Activated naive CD8-positive, alpha-beta T cell treated with anti-CD3 and anti-CD28 coated beads, Interleukin-2, amount 10 ng/mL, durations not matched to agents 7 days and 5 days (primary cell): ENCODE measurements at regions of chr14 and their contacts with region 1.

Region 1: DNA sequence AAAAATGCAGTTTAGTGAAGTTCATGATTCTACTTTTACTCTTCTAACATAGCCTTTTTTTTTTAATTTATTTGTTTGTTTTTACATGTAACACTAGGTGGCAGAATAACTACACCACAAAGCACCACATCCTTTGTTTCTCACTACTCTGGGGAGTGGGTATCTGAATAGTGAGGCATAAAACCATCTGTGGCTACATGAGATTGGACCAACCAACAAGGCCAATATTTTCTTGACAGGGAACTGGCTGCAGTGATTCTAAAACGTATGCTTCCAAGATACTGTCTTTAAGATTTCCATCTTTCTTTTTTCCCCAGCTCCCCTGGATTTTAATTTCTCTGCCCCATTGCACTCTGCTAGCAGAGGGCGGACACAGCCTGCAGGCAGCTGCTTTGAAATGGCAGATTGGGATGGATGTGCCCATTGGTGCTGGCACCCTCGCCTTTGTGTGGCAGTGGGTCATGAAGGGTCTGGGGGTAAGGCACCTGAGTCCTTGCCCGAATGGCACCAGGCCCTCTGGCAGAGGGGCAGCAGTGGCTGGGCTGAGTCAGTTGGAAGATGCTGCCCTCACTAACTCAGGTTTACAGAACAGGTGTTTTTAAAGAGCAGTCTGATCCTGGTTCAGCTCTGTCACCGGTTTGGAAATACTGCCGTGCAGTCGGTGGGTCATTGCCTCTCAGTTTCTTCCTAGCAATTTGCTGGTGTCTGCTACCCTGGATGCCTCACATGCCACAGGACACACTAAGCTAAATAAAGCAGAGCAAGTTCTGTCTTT is 429.1 kb downstream of the RAD51B start:
- DNase-seq: peak; percentile 31
- ATAC-seq: peak; percentile 58
- H3K4me3 Mint-ChIP-seq: no peak overlapping the region
- H3K27ac Mint-ChIP-seq: no peak overlapping the region
- H3K4me1 Mint-ChIP-seq: peaks cover 12% of the 10 kb centered on the region
- H3K27me3 Mint-ChIP-seq: no peaks in the 10 kb centered on the region

Region 2: GRCh38 chr14:68816262-68816942 is 567.7 kb after region 1 on chr14:
- POLR2A ChIA-PET with region 1: interaction called, 22 read pairs
- DNase-seq: peak; percentile 93
- ATAC-seq: peak; percentile 83
- H3K4me3 Mint-ChIP-seq: peak overlapping the region; percentile 84
- H3K27ac Mint-ChIP-seq: peak overlapping the region; percentile 89
- H3K4me1 Mint-ChIP-seq: peaks cover 47% of the 10 kb centered on the region
- H3K27me3 Mint-ChIP-seq: no peaks in the 10 kb centered on the region